ENCODE measurements at regions of chr2 and their contacts with region 1.

Region 1: GRCh38 chr2:134411828-134412638 is 158.2 kb downstream of the MGAT5 start:
- DNase-seq: peak; percentile 77
- ATAC-seq: peak; percentile 59
- H3K4me3 ChIP-seq: no peak overlapping the region
- H3K27ac ChIP-seq: no peak overlapping the region
- H3K4me1 ChIP-seq: peaks cover 32% of the 10 kb centered on the region
- H3K27me3 ChIP-seq: no peaks in the 10 kb centered on the region
- CTCF ChIP-seq: peak; percentile 84

Region 2: DNA sequence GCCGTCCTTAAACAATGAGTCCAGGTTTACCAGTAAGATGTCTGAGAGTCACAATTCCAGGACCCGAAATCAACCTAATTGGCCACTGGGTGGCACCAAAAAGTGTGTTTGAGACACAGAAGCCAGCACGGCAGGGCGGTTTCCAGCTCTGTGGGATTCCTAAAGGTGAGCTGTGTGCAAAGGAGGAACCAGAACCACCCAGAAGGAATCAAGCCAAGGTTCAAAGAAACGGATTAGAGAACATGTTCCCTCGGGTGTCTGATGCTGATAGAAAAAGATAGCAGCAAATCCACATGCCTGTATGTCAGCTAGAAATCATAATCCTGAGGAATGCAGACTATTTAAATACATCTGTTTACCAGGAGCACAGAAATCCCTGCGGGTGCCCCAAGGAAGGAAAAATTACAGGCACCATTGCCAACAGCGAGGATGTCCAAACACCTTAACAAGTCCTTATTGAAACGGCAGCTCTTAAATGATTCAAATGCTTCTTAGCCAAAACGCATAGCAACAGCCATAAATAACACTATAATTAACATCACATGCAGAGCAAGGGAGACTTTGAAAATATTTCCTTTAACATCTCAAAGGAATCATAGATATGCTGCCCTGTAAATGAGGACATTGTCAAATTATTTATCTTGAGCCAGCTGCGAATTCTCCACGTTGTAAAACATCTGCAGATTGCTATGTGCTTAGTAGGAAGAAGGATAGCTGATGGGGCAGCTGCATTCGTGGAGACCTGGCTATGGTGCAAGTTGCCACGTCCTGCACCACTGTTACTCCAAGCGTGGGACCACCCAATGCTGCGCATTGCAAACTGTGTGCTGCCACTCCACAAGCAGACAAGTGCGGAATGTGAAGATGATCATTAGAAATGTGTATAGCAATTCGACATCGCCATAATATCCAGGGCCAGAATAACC is 525.0 kb before region 1 on chr2:
- CTCF ChIA-PET with region 1: interaction called, 6 read pairs
- POLR2A ChIA-PET with region 1: no interaction called
- intact Hi-C with region 1: loop called (anchors 5 kb)
- DNase-seq: peak; percentile 91
- ATAC-seq: peak; percentile 83
- H3K4me3 ChIP-seq: peak overlapping the region; percentile 46; the same call in 1 of the 2 replicates
- H3K27ac ChIP-seq: no peak overlapping the region
- H3K4me1 ChIP-seq: peaks cover 17% of the 10 kb centered on the region
- H3K27me3 ChIP-seq: no peaks in the 10 kb centered on the region
- CTCF ChIP-seq: peak; percentile 85

Region 3: GRCh38 chr2:134375935-134376334 is 36.1 kb before region 1 on chr2:
- CTCF ChIA-PET with region 1: interaction called, 8 read pairs
- POLR2A ChIA-PET with region 1: no interaction called
- intact Hi-C with region 1: loop called (anchors 2 kb)
- DNase-seq: peak; percentile 47
- ATAC-seq: peak; percentile 75
- H3K4me3 ChIP-seq: no peak overlapping the region
- H3K27ac ChIP-seq: no peak overlapping the region
- H3K4me1 ChIP-seq: peaks cover 13% of the 10 kb centered on the region
- H3K27me3 ChIP-seq: no peaks in the 10 kb centered on the region
- CTCF ChIP-seq: peak; percentile 54

Region 4: GRCh38 chr2:134451347-134451630 is 39.3 kb after region 1 on chr2:
- CTCF ChIA-PET with region 1: interaction called, 9 read pairs
- POLR2A ChIA-PET with region 1: no interaction called
- intact Hi-C with region 1: loop called (anchors 2 kb)
- DNase-seq: no peak
- ATAC-seq: no peak
- H3K4me3 ChIP-seq: no peak overlapping the region
- H3K27ac ChIP-seq: no peak overlapping the region
- H3K4me1 ChIP-seq: peaks cover 7% of the 10 kb centered on the region
- H3K27me3 ChIP-seq: no peaks in the 10 kb centered on the region
- CTCF ChIP-seq: no peak

Region 5: DNA sequence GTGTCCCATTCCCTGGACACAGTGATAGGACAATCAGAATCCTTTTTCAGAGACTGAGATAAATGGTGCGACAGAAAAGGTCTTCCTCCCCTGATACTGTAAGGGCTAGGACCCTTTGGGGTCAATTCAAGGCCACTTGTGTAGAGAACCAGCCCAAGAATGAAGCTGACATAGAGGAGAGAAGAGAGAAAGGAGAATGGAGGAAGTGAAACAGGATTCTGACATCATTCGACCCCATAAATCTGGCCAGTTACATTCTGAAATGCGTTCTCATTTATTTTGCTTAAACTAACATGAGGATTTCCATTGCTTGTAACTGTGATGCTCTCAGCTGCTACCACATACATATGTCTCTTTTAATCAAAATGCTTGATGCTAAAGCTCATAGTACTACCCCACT is 158.6 kb after region 1 on chr2:
- CTCF ChIA-PET with region 1: no interaction called
- POLR2A ChIA-PET with region 1: no interaction called
- intact Hi-C with region 1: no loop called
- DNase-seq: no peak
- ATAC-seq: no peak
- H3K4me3 ChIP-seq: no peak overlapping the region
- H3K27ac ChIP-seq: no peak overlapping the region
- H3K4me1 ChIP-seq: no peaks in the 10 kb centered on the region
- H3K27me3 ChIP-seq: no peaks in the 10 kb centered on the region
- CTCF ChIP-seq: no peak

Measured in PC-3 (cell line).